Activated CD8-positive, alpha-beta T cell treated with anti-CD3 and anti-CD28 coated beads for 36 hours (primary cell): ENCODE measurements at regions of chr14 and their contacts with region 1.

Region 1: DNA sequence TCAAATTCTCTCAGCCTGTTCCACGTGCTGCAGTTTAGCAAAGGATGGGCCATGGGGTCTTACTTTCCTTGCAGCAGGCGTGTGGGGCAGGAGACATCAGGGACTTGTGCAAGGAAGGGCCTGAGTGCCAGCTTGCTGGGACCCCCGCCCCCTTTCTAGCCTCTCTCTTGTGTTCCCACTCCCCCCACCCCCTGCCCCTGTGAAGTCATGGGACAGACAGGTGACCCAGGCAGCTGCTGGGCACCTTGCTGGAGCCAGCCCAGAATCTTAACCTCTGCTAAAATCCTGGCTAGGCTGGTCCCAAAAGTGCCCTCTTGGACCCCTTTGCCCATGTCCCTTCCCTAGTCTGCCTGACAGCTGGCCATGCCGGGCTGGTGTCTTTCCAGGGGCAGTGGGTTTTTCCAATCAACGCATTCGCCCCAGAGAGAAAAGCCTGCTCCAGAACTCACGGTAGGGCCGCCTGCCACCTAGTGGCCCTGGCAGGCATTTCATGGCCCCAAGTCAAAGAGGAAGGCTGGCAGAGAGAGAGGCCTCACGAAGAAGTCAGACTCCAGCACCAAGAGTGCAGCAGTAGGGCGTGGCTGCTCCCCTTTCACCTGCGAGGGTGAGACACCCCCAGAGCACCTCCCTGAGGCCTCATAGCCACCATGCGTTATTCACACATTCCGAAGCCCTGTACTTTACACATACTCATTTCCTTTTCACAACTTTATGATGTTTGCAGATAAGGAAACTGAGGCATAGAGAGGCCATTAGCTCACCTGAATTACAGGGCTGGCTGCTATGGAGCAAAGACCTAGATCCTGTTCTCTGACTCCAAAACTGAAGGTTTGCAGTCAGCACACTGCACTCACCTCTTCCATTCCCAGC is 67.4 kb downstream of the LGMN start:
- DNase-seq: peak; percentile 86
- ATAC-seq: peak; percentile 42
- H3K4me3 Mint-ChIP-seq: no peak overlapping the region
- H3K27ac Mint-ChIP-seq: peak overlapping the region; percentile 80
- H3K4me1 Mint-ChIP-seq: peaks cover 45% of the 10 kb centered on the region
- H3K27me3 Mint-ChIP-seq: no peaks in the 10 kb centered on the region
- CTCF ChIP-seq: peak; percentile 97

Region 2: GRCh38 chr14:92531106-92531873 is 149.7 kb before region 1 on chr14:
- CTCF ChIA-PET with region 1: no interaction called
- POLR2A ChIA-PET with region 1: no interaction called
- intact Hi-C with region 1: loop called (anchors 2 kb)
- DNase-seq: peak; percentile 96
- ATAC-seq: peak; percentile 84
- H3K4me3 Mint-ChIP-seq: peak overlapping the region; percentile 60
- H3K27ac Mint-ChIP-seq: peak overlapping the region; percentile 99
- H3K4me1 Mint-ChIP-seq: peaks cover 86% of the 10 kb centered on the region
- H3K27me3 Mint-ChIP-seq: no peaks in the 10 kb centered on the region
- CTCF ChIP-seq: no peak

Region 3: GRCh38 chr14:92556255-92556741 is 124.7 kb before region 1 on chr14:
- CTCF ChIA-PET with region 1: interaction called, 3 read pairs
- POLR2A ChIA-PET with region 1: no interaction called
- intact Hi-C with region 1: loop called (anchors 5 kb)
- DNase-seq: peak; percentile 53
- ATAC-seq: peak; percentile 60
- H3K4me3 Mint-ChIP-seq: peak overlapping the region; percentile 42
- H3K27ac Mint-ChIP-seq: peak overlapping the region; percentile 95
- H3K4me1 Mint-ChIP-seq: peaks cover 88% of the 10 kb centered on the region
- H3K27me3 Mint-ChIP-seq: no peaks in the 10 kb centered on the region
- CTCF ChIP-seq: no peak

Region 4: GRCh38 chr14:92603309-92604242 is 77.4 kb before region 1 on chr14:
- CTCF ChIA-PET with region 1: interaction called, 11 read pairs
- POLR2A ChIA-PET with region 1: no interaction called
- intact Hi-C with region 1: loop called (anchors 5 kb)
- DNase-seq: peak; percentile 56
- ATAC-seq: peak; percentile 80
- H3K4me3 Mint-ChIP-seq: no peak overlapping the region
- H3K27ac Mint-ChIP-seq: no peak overlapping the region
- H3K4me1 Mint-ChIP-seq: peaks cover 41% of the 10 kb centered on the region
- H3K27me3 Mint-ChIP-seq: no peaks in the 10 kb centered on the region
- CTCF ChIP-seq: peak; percentile 38

Region 5: GRCh38 chr14:92651106-92651757 is 29.8 kb before region 1 on chr14:
- CTCF ChIA-PET with region 1: interaction called, 23 read pairs
- POLR2A ChIA-PET with region 1: interaction called, 7 read pairs
- intact Hi-C with region 1: no loop called
- DNase-seq: peak; percentile 94
- ATAC-seq: peak; percentile 82
- H3K4me3 Mint-ChIP-seq: peak overlapping the region; percentile 94
- H3K27ac Mint-ChIP-seq: peak overlapping the region; percentile 97
- H3K4me1 Mint-ChIP-seq: peaks cover 73% of the 10 kb centered on the region
- H3K27me3 Mint-ChIP-seq: no peaks in the 10 kb centered on the region
- CTCF ChIP-seq: no peak

Region 6: DNA sequence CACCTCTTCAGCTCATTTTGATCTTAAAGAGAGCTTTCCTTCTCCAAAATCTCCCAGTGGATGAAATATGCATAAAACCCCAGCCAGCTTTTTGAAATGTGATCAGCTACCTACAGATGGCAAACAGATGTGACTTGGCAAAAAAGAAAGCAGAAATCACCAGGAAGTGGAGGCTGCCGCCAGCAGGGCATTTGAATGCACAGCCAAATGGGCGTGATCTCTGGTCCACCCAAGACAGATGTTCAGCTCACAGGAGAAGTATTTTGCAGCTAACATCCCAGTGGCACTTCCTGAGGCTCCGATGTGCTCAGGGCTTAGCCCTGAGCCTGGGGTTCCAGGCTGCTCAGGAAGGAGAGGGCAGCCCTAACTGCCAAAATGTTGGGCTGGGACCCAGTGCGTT is 10.9 kb before region 1 on chr14:
- CTCF ChIA-PET with region 1: interaction called, 10 read pairs
- POLR2A ChIA-PET with region 1: no interaction called
- intact Hi-C with region 1: no loop called
- DNase-seq: no peak
- ATAC-seq: no peak
- H3K4me3 Mint-ChIP-seq: no peak overlapping the region
- H3K27ac Mint-ChIP-seq: peak overlapping the region; percentile 89
- H3K4me1 Mint-ChIP-seq: peaks cover 84% of the 10 kb centered on the region
- H3K27me3 Mint-ChIP-seq: no peaks in the 10 kb centered on the region
- CTCF ChIP-seq: no peak

Region 7: DNA sequence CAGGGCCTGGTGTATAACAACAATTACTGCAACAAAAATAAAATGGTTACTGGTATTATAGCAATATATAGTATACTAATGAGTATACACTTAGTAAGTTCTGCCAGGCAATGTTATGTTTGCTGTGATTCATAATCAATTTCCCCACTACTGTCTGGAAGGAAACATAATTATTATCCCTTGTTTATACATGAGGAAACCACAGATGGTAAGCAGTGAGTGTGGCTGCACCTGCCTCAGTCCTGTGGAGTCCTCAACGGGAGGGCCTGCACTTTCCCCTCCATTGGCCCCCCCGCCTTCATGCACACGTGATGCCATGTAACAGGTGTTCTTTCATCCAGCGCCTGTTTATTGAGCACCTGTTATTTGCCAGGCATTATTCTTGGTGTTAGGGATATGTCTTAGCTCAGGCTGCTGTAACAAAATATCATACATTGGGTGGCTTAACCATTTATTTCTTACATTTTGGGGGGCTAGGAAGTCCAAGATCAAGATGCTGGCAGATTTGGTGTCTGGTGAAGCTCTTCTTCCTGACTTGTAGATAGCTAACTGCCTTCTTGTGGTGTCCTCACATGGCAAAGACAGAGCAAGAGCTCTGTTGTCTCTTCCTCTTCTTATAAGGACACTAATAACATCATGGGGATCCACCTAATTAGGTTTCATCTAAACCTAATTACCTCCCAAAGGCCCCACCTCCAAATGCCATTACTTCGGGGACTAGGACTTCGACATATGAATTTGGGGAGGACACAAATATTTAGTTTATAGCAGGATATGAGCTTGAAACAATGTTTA is 182.5 kb after region 1 on chr14:
- CTCF ChIA-PET with region 1: no interaction called
- POLR2A ChIA-PET with region 1: no interaction called
- intact Hi-C with region 1: no loop called
- DNase-seq: no peak
- ATAC-seq: no peak
- H3K4me3 Mint-ChIP-seq: no peak overlapping the region
- H3K27ac Mint-ChIP-seq: no peak overlapping the region
- H3K4me1 Mint-ChIP-seq: peaks cover 3% of the 10 kb centered on the region
- H3K27me3 Mint-ChIP-seq: peaks cover 8% of the 10 kb centered on the region
- CTCF ChIP-seq: no peak